Naive thymus-derived CD4-positive, alpha-beta T cell (primary cell): ENCODE measurements at regions of chr7 and their contacts with region 1.

Region 1: GRCh38 chr7:26200444-26201246 is at the start of gene HNRNPA2B1:
- DNase-seq: peak; percentile 97 to 100 (median 99)
- ATAC-seq: peak; percentile 84
- H3K4me3 ChIP-seq: peak within 1 kb of the TSS; percentile 99
- H3K4me3 Mint-ChIP-seq: peak within 1 kb of the TSS; percentile 94 to 100 (median 100)
- H3K27ac ChIP-seq: peak within 1 kb of the TSS; percentile 97
- H3K27ac Mint-ChIP-seq: peak within 1 kb of the TSS; percentile 98 to 100 (median 100)
- H3K4me1 ChIP-seq: peaks cover 27 to 35% of the 10 kb centered on the region in 2 donors
- H3K4me1 Mint-ChIP-seq: peaks cover 37 to 60% (median 53%) of the 10 kb centered on the region in 7 donors
- H3K27me3 ChIP-seq: no peaks in the 10 kb centered on the region
- H3K27me3 Mint-ChIP-seq: peaks cover 0 to 9% (median 0%) of the 10 kb centered on the region in 5 donors
- total RNA-seq, gene HNRNPA2B1: 394 to 702 (median 437) TPM

Region 2: DNA sequence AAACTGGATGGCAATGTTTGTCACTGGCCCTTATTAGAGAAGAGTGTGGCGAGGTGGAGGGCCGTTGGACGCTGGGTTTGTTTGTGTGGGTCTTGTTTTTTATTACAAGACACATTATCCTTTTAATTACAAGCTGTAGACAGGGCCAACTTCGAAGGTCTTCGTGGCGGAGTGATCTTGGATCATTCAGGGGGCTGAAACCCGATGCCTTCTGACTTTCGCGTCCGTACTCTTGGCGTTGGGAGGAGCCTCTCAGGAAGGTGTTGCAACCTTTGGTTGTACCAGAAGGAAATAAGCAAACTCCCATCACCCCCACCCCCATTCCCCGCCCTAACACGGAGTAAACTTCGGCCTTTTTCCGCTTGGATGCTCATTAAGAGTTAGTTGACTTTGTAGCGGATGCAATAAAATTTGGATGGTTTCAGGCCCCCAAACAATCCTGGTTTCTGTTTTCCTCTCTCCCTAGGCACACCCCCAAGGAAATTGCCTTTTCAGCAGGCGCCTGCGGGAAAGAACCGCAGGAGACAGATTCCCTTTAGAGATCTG is 343.2 kb before region 1 on chr7:
- CTCF ChIA-PET with region 1: no interaction called
- POLR2A ChIA-PET with region 1: no interaction called
- intact Hi-C with region 1: loop called in 1 of 2 experiments (anchors 1 kb)
- DNase-seq: peak in 1 of 9 donors; percentile 7
- ATAC-seq: no peak
- H3K4me3 ChIP-seq: no peak overlapping the region
- H3K4me3 Mint-ChIP-seq: no peak overlapping the region
- H3K27ac ChIP-seq: no peak overlapping the region
- H3K27ac Mint-ChIP-seq: no peak overlapping the region
- H3K4me1 ChIP-seq: peaks cover 4 to 11% of the 10 kb centered on the region in 2 donors
- H3K4me1 Mint-ChIP-seq: peaks cover 10 to 59% (median 24%) of the 10 kb centered on the region in 7 donors
- H3K27me3 ChIP-seq: peaks cover 34 to 96% of the 10 kb centered on the region in 2 donors
- H3K27me3 Mint-ChIP-seq: peaks cover 22 to 62% (median 56%) of the 10 kb centered on the region in 5 donors

Region 3: DNA sequence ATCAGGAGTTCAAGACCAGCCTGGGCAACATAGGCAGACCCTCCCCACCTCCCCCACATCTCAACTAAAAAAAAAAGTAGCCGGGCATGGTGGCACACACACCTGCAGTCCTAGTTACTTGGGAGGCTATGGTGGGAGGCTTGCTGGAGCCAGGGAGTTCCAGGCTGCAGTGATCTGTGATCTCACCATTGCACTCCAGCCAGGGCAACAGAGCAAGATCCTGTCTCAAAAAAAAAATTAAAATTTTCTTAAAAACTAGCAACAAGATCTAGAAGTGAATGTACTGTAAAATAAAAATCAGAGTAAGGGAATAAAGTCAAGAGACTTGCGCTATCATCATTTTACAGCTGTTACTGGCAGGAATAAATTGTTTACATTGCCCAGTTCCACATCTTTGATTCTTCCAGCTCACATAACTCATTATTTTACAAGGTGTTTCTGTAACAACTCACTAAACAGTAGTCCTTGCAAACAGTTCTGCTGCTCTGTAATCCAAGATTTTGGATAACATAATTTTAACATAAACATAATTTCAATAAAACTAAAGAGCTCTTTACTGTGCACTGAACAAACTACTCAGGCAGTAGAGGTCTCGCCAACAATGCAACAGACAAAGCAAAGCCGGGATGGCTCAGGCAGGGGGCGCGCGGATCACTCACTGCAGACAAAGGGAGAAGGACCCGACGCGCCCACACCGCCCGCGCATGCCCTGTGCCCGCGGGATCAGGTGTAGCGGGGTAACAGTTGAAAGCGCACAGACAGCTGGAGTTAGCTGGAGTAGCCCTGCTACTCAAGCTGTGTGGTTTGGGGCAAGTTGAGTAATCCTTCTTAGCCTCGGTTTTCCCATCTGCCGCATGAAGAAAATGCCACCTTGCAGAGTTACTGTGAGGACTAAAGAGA is 122.0 kb before region 1 on chr7:
- CTCF ChIA-PET with region 1: interaction called, 7 read pairs
- POLR2A ChIA-PET with region 1: interaction called, 6 read pairs
- intact Hi-C with region 1: loop called in 1 of 2 experiments (anchors 1 kb)
- DNase-seq: peak; percentile 68 to 86 (median 80)
- ATAC-seq: peak; percentile 99
- H3K4me3 ChIP-seq: no peak overlapping the region
- H3K4me3 Mint-ChIP-seq: peak overlapping the region in 7 of 10 donors; percentile 30 to 68 (median 51)
- H3K27ac ChIP-seq: no peak overlapping the region
- H3K27ac Mint-ChIP-seq: no peak overlapping the region
- H3K4me1 ChIP-seq: peaks cover 0 to 10% of the 10 kb centered on the region in 2 donors
- H3K4me1 Mint-ChIP-seq: peaks cover 0 to 10% (median 6%) of the 10 kb centered on the region in 7 donors
- H3K27me3 ChIP-seq: peaks cover 0 to 6% of the 10 kb centered on the region in 2 donors
- H3K27me3 Mint-ChIP-seq: peaks cover 15 to 84% (median 33%) of the 10 kb centered on the region in 5 donors

Region 4: GRCh38 chr7:26151953-26152781 is 48.5 kb before region 1 on chr7 and contains the start of gene NFE2L3:
- CTCF ChIA-PET with region 1: interaction called, 18 read pairs
- POLR2A ChIA-PET with region 1: interaction called, 73 read pairs
- intact Hi-C with region 1: loop called (anchors 1 kb)
- DNase-seq: peak; percentile 71 to 90 (median 79)
- ATAC-seq: peak; percentile 90
- H3K4me3 ChIP-seq: peak within 1 kb of the TSS; percentile 77
- H3K4me3 Mint-ChIP-seq: peak within 1 kb of the TSS; percentile 85 to 100 (median 92)
- H3K27ac ChIP-seq: peak within 1 kb of the TSS; percentile 73
- H3K27ac Mint-ChIP-seq: peak within 1 kb of the TSS; percentile 74 to 97 (median 93)
- H3K4me1 ChIP-seq: peaks cover 26 to 33% of the 10 kb centered on the region in 2 donors
- H3K4me1 Mint-ChIP-seq: peaks cover 23 to 56% (median 51%) of the 10 kb centered on the region in 7 donors
- H3K27me3 ChIP-seq: no peaks in the 10 kb centered on the region
- H3K27me3 Mint-ChIP-seq: no peaks in the 10 kb centered on the region
- total RNA-seq, gene NFE2L3: 1.1 to 49.5 (median 4.5) TPM

Region 5: DNA sequence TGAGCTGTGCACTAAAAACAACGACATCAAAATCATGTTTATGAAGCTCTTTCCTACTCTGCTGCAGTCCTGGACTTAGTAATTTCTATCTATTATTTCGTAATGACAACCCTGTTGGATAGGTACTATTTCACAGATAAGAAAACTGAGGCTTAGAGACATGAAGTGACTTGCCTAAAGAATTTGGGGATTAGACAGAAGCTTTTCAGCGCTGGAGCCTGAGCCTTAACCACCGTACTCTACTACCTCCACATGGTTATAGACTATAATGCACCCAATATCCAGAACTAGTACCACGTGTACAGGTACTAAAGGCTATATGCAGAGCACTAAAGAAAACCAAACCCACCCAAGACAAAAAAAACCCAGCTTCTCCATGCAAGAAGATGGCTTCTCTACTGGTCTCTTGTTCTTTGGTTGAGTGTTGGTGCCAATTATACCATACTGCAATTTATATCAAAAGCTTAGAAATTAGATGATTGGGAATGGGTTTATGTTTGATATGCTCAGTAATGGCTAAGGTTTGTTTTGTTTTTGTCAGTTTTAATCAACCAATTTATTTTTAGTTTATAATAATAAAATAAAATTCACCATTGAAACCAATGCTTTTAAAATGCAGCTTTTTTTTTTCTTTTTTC is 84.5 kb after region 1 on chr7:
- CTCF ChIA-PET with region 1: interaction called, 11 read pairs
- POLR2A ChIA-PET with region 1: interaction called, 20 read pairs
- intact Hi-C with region 1: no loop called
- DNase-seq: peak in 6 of 9 donors; percentile 20 to 49 (median 30)
- ATAC-seq: peak; percentile 82
- H3K4me3 ChIP-seq: no peak overlapping the region
- H3K4me3 Mint-ChIP-seq: no peak overlapping the region
- H3K27ac ChIP-seq: no peak overlapping the region
- H3K27ac Mint-ChIP-seq: no peak overlapping the region
- H3K4me1 ChIP-seq: no peaks in the 10 kb centered on the region
- H3K4me1 Mint-ChIP-seq: peaks cover 0 to 6% (median 4%) of the 10 kb centered on the region in 7 donors
- H3K27me3 ChIP-seq: no peaks in the 10 kb centered on the region
- H3K27me3 Mint-ChIP-seq: peaks cover 0 to 19% (median 0%) of the 10 kb centered on the region in 5 donors

Region 6: GRCh38 chr7:27160546-27161213 is 960.0 kb after region 1 on chr7:
- CTCF ChIA-PET with region 1: no interaction called
- POLR2A ChIA-PET with region 1: interaction called, 3 read pairs
- intact Hi-C with region 1: loop called in 1 of 2 experiments (anchors 5 kb)
- DNase-seq: peak; percentile 69 to 89 (median 84)
- ATAC-seq: peak; percentile 91
- H3K4me3 ChIP-seq: peak overlapping the region; percentile 81
- H3K4me3 Mint-ChIP-seq: peak overlapping the region; percentile 71 to 88 (median 80)
- H3K27ac ChIP-seq: no peak overlapping the region
- H3K27ac Mint-ChIP-seq: peak overlapping the region in 1 of 9 donors; percentile 33
- H3K4me1 ChIP-seq: peaks cover 24 to 38% of the 10 kb centered on the region in 2 donors
- H3K4me1 Mint-ChIP-seq: peaks cover 15 to 52% (median 34%) of the 10 kb centered on the region in 7 donors
- H3K27me3 ChIP-seq: peaks cover 27 to 61% of the 10 kb centered on the region in 2 donors
- H3K27me3 Mint-ChIP-seq: peaks cover 62 to 89% (median 77%) of the 10 kb centered on the region in 5 donors